IMR-90 (cell line): ENCODE measurements at regions of chr16 and their contacts with region 1.

Region 1: GRCh38 chr16:80752541-80752940 is 51.9 kb downstream of the CDYL2 start:
- DNase-seq: no peak
- ATAC-seq: no peak
- H3K4me3 ChIP-seq: no peak overlapping the region
- H3K27ac ChIP-seq: no peak overlapping the region
- H3K4me1 ChIP-seq: no peaks in the 10 kb centered on the region
- H3K27me3 ChIP-seq: no peaks in the 10 kb centered on the region
- CTCF ChIP-seq: no peak
- POLR2A ChIP-seq: no peak
- RAD21 ChIP-seq: no peak

Region 2: DNA sequence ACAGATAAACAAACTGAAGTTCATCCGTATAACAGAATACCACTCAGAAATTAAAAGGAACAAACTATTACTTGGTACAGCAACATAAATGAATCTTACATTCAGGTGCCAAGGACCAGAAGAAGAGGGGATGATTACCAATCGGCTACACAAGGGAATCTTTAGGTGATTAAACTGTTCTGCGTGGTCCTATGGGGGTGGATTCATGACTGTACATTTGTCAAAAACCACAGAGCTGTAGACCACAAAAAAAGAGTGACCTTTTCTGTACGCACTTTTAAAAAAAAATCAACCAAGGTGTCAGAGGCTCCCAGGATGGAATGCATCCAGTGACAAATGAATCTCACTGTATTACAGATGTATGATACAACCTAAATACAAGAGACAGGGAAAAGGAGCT is 59.0 kb before region 1 on chr16:
- CTCF ChIA-PET with region 1: no interaction called
- POLR2A ChIA-PET with region 1: no interaction called
- dilution Hi-C with region 1: no loop called
- in situ Hi-C with region 1: no loop called
- intact Hi-C with region 1: loop called (anchors 2 kb)
- DNase-seq: peak; percentile 1
- ATAC-seq: no peak
- H3K4me3 ChIP-seq: no peak overlapping the region
- H3K27ac ChIP-seq: no peak overlapping the region
- H3K4me1 ChIP-seq: no peaks in the 10 kb centered on the region
- H3K27me3 ChIP-seq: no peaks in the 10 kb centered on the region
- CTCF ChIP-seq: no peak
- POLR2A ChIP-seq: no peak
- RAD21 ChIP-seq: no peak

Region 3: DNA sequence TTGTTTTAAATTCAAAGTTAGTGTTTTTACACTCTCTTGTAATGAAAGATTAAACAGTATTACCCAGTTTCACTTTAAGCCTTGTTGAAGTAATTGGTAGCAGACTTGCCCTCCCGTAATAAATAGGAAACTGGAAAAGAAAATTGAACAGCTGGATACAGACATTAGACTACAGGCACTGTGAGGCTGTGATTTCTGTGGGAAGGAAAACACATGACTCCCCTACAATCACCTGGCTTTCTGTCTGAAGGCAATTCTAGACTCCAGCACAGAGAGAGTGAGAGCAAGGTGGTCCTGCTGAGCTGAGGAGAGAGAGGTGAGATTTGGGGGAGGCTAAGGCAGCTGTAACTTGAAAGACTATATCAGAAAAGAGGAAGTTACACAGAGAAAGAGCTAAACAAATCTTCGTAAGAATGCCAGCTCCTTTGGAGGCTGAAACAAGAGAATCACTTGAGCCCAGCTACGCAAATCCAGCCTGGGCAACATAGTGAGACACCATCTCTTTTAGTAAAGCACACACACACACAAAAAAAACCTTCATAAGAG is 109.7 kb after region 1 on chr16:
- CTCF ChIA-PET with region 1: no interaction called
- POLR2A ChIA-PET with region 1: no interaction called
- dilution Hi-C with region 1: no loop called
- in situ Hi-C with region 1: no loop called
- intact Hi-C with region 1: no loop called
- DNase-seq: no peak
- ATAC-seq: no peak
- H3K4me3 ChIP-seq: no peak overlapping the region
- H3K27ac ChIP-seq: no peak overlapping the region
- H3K4me1 ChIP-seq: no peaks in the 10 kb centered on the region
- H3K27me3 ChIP-seq: no peaks in the 10 kb centered on the region
- CTCF ChIP-seq: no peak
- POLR2A ChIP-seq: no peak
- RAD21 ChIP-seq: no peak